Activated CD4-positive, alpha-beta T cell treated with anti-CD3 and anti-CD28 coated beads for 36 hours (primary cell): ENCODE measurements at regions of chr1 and their contacts with region 1.

Region 1: DNA sequence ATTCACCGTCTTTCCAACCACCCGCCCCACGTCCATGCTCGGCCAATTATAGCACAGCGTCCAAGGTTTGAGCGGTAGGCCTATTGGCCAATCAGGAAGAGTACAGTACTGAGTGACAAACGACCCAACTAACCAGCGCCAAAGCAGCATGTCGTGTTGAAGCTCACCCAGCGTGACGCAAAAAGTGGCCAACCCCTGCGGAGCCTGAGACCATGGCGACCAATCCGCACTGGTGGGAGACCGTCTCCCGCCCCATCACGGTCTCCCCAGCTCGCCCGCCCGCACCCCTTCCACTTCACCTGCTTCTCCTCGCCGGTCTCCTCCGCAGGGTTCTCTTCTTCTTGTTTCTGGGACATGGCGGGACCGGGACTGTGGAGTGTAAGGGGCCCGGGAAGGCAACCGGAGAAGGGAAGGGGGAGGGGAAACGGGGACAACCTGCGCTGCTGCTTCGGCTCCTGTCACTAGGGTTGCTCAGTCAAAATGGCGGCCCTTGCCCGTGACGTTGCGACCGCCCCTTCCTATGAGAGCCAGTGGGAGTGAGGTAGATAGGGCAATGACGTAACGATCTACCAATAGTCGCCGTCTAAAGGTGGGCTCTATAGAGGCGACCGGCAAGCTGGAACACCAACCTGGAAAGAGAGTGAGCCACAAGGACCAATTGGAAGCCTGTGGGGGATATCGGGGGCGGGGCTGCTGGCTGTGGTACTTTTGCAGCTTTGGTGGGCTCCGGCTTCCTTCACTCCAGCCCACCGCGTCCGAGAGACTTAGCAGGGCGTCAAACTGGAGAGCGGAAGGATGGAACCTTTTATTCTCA is at the start of gene ENSA:
- DNase-seq: peak; percentile 97
- ATAC-seq: peak; percentile 89
- H3K4me3 Mint-ChIP-seq: no peak within 1 kb of the TSS
- H3K27ac Mint-ChIP-seq: no peak within 1 kb of the TSS
- H3K4me1 Mint-ChIP-seq: peaks cover 29% of the 10 kb centered on the region
- H3K27me3 Mint-ChIP-seq: no peaks in the 10 kb centered on the region
- total RNA-seq, gene ENSA: 197 to 240 TPM

Region 2: GRCh38 chr1:150010393-150011115 is 618.8 kb before region 1 on chr1 and contains the start of gene OTUD7B:
- CTCF ChIA-PET with region 1: no interaction called
- POLR2A ChIA-PET with region 1: interaction called, 3 read pairs
- intact Hi-C with region 1: loop called in 1 of 2 experiments (anchors 1 kb)
- DNase-seq: peak; percentile 88
- ATAC-seq: peak; percentile 62
- H3K4me3 Mint-ChIP-seq: peak within 1 kb of the TSS; percentile 99
- H3K27ac Mint-ChIP-seq: peak within 1 kb of the TSS; percentile 99
- H3K4me1 Mint-ChIP-seq: peaks cover 37% of the 10 kb centered on the region
- H3K27me3 Mint-ChIP-seq: no peaks in the 10 kb centered on the region
- total RNA-seq, gene OTUD7B: 18.5 to 20.1 TPM

Region 3: DNA sequence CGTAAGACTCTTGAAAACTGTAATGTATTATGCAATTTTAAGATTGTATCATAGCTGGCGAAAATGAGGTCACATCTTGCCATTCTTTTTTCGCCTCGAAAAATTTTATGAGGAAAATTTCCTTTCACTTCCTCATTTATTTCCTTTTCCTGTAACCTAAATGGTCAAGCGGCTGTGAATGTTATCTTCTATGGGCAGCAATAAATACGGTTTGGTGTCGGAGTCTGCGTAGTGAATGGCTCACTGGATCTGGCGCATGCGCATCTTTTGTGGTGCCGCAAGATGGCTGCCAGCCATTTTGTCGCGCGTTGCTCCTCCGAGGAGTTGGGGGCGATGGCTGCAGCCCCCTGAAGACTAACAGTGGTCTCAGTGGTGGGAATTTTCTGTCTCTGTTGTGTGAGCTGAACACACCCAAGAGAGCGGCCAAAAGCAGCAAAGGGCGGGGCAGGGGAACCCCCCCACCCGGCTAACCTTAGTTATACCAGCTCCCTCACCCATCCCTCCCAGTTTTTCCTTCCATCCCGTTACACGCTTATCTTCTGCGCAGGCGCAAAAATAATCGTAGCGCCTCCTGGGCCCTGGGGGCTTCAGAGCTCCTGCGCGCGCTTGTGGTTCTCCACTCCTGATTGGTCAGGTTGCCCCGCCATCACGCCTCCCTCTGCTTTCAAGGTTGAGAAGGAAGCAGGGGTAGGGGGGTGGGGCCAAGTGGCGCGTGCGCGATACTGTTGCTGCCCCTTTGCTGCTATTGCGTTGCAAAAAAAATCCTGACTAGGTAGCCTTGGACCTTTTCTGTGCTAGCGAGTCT is 265.7 kb before region 1 on chr1 and contains the start of gene RPRD2:
- CTCF ChIA-PET with region 1: no interaction called
- POLR2A ChIA-PET with region 1: no interaction called
- intact Hi-C with region 1: loop called (anchors 1 to 10 kb)
- DNase-seq: peak; percentile 99
- ATAC-seq: peak; percentile 95
- H3K4me3 Mint-ChIP-seq: peak within 1 kb of the TSS; percentile 91
- H3K27ac Mint-ChIP-seq: peak within 1 kb of the TSS; percentile 99
- H3K4me1 Mint-ChIP-seq: peaks cover 13% of the 10 kb centered on the region
- H3K27me3 Mint-ChIP-seq: no peaks in the 10 kb centered on the region
- total RNA-seq, gene RPRD2: 24.4 to 32.2 TPM

Region 4: DNA sequence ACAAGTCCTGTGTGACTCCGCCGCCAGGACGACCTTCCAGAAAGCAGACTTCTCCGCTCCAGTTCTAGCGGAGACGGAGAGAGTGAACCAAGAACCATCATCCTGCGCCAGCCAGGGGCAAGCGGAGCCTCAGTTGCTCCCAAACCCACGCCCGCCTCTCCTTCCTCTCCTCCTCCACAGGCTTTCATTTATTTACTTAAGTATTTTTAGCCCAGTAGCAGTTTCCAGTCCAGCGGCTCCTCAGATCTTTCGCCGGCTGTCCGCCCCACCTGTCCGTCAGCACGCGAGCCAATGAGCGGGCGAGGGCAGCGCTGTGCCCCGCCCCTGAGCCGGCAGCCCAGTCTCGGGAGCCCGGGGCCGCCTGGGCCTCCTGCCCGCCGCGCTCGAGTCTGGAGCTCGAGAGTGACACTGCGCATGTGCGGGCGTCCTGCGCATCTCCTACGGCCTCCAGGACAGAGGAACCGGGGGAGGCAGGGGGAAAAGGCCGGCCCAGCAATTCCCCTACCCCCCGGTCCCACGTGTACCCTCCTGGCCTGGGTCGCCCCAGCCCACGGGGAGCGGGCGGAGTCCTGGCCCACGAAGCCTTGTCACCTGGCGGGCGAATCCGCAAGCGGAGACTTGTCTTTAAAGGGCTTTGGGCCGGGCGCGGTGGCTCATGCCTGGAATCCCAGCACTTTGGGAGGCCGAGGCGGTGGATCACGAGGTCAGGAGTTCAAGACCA is 113.8 kb before region 1 on chr1 and contains the start of gene FALEC:
- CTCF ChIA-PET with region 1: no interaction called
- POLR2A ChIA-PET with region 1: no interaction called
- intact Hi-C with region 1: loop called in 1 of 2 experiments (anchors 1 kb)
- DNase-seq: peak; percentile 95
- ATAC-seq: peak; percentile 99
- H3K4me3 Mint-ChIP-seq: peak within 1 kb of the TSS; percentile 80
- H3K27ac Mint-ChIP-seq: peak within 1 kb of the TSS; percentile 59
- H3K4me1 Mint-ChIP-seq: peaks cover 10% of the 10 kb centered on the region
- H3K27me3 Mint-ChIP-seq: no peaks in the 10 kb centered on the region
- total RNA-seq, gene FALEC: 0.34 TPM in 1 of 2 experiments, not detected in the other

Region 5: DNA sequence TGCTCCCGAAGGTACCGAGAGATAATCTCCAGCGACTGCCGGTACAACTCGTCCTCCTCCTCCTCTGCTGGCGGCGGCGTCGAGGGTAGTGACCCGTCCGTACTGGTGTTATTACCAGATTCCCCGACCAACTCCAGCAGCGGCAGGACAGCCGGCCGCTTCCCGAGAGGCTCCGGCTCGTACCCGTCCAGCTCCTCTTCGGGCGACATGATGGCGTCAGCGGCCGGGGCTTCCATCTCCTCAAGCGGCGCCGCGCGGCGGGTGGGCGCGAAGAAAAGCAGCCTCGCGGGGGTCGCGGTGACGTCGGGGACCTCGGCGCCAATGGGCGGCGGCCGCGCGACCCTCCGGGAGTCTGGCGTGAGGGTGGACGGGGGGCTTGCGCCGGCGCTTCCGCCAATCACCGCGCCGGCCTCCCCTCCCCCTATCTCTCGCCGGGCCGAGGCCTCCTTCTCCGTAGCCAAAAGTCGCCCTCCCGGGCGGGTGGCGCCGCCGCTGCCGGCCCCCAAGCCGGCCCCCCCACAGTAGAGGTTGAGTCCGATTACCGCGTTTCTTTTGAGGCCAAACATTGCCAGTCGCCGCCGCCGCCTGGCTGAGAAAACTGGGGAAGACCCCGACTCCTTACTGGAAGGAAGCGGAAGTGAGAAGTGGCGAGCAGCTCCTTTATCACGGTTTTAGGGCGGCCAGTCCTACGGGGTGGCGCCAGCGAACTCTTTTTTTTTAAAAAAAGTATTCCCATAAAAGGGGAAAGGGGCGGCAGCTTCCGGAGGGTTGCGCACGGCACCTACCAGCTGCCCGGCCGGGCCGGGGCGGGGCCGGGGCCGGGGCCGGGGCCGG is 50.1 kb before region 1 on chr1 and contains the start of gene MCL1:
- CTCF ChIA-PET with region 1: interaction called, 461 read pairs
- POLR2A ChIA-PET with region 1: interaction called, 53 read pairs
- intact Hi-C with region 1: loop called in 1 of 2 experiments (anchors 1 kb)
- DNase-seq: peak; percentile 94
- ATAC-seq: peak; percentile 81
- H3K4me3 Mint-ChIP-seq: peak within 1 kb of the TSS; percentile 95
- H3K27ac Mint-ChIP-seq: peak within 1 kb of the TSS; percentile 97
- H3K4me1 Mint-ChIP-seq: peaks cover 24% of the 10 kb centered on the region
- H3K27me3 Mint-ChIP-seq: no peaks in the 10 kb centered on the region
- total RNA-seq, gene MCL1: 185 to 265 TPM

Region 6: GRCh38 chr1:150696590-150697524 is 67.5 kb after region 1 on chr1 and contains the start of gene GOLPH3L:
- CTCF ChIA-PET with region 1: interaction called, 3 read pairs
- POLR2A ChIA-PET with region 1: interaction called, 9 read pairs
- intact Hi-C with region 1: loop called (anchors 1 kb)
- DNase-seq: peak; percentile 93
- ATAC-seq: peak; percentile 100
- H3K4me3 Mint-ChIP-seq: peak within 1 kb of the TSS; percentile 98
- H3K27ac Mint-ChIP-seq: peak within 1 kb of the TSS; percentile 92
- H3K4me1 Mint-ChIP-seq: peaks cover 21% of the 10 kb centered on the region
- H3K27me3 Mint-ChIP-seq: peaks cover 3% of the 10 kb centered on the region
- total RNA-seq, gene GOLPH3L: 24.2 to 29.1 TPM

Region 7: DNA sequence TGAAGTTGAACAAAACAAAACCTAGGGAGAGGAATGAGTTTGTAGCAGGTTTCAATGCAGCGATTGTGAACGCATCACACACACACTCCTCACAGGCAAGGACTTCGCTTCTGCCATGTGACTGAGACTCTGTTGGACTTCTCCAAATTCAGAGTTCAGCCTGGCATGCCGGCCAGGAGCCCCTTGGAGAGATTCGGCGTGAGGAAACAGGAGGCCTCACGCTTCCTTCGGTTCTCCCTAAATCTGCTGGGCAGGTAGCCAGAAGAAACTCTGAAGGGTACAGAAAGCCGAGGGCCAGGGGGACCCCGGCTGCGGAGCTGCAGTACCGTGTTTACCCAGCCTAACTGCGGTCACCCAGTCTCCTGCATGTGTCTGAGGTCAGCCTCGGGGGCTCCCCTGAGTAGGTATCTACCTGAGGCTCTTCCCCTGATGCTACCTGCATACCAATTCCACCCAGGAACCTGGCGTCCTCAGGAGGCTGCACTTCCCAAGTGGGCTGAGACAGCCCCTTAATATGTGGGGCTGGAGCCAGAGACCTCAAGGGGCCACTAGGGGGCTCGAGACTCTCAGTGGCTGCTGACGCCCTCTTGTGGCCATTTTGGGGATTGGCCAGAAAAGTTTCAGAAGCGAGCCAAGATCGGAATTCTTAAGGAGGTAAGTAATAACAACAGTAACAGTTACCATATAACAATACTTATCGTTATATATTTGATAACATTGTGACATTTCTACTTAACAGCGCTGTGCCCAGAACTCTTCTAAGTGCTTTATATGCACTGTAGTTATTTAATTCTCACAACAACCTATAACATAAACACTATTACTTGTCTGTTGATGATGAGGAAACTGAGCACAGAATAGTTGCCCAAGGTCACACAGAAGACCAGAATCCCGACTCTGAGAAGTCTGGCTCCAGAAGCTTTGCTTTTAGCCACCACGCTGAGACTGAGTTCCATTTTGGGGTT is 350.1 kb after region 1 on chr1:
- CTCF ChIA-PET with region 1: interaction called, 3 read pairs
- POLR2A ChIA-PET with region 1: interaction called, 9 read pairs
- intact Hi-C with region 1: loop called in 1 of 2 experiments (anchors 2 kb)
- DNase-seq: peak; percentile 94
- ATAC-seq: peak; percentile 53
- H3K4me3 Mint-ChIP-seq: no peak overlapping the region
- H3K27ac Mint-ChIP-seq: peak overlapping the region; percentile 63
- H3K4me1 Mint-ChIP-seq: peaks cover 39% of the 10 kb centered on the region
- H3K27me3 Mint-ChIP-seq: no peaks in the 10 kb centered on the region